Activated CD4-positive, alpha-beta T cell treated with anti-CD3 and anti-CD28 coated beads for 36 hours (primary cell): ENCODE measurements at regions of chr22 and their contacts with region 1.

Region 1: GRCh38 chr22:26756675-26757293 is 99.4 kb downstream of the MIAT start:
- DNase-seq: peak; percentile 80
- ATAC-seq: peak; percentile 81
- H3K4me3 Mint-ChIP-seq: no peak overlapping the region
- H3K27ac Mint-ChIP-seq: no peak overlapping the region
- H3K4me1 Mint-ChIP-seq: no peaks in the 10 kb centered on the region
- H3K27me3 Mint-ChIP-seq: no peaks in the 10 kb centered on the region

Region 2: DNA sequence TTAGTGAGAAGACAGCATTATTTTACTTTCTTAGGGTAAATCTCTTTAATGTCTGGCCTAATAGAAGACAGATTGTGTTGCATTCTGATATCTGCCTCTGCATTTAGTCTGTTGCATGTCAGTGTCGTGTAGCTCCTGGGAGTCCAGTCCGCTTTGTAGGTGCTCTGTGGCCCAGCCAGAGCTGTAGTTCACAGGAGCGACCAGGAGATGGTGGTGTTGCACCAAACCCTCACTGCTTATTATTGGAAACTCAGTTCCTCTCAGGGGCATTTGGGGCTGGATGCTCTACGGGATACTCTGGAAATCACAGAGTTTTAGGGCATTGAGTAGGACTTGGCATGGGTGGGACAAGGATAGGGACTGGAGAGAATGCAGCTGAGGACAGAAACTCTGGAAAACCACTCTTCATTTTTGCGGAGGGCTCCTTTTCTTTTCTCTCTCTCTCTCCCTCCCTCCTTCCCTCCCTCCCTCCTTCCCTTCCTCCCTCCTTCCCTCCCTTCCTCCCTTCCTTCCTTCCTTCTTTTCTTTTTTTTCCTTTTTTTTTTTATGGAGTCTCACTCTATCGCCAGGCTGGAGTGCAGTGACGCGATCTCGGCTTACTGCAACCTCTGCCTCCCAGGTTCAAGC is 77.7 kb before region 1 on chr22:
- CTCF ChIA-PET with region 1: interaction called, 3 read pairs
- POLR2A ChIA-PET with region 1: no interaction called
- intact Hi-C with region 1: loop called in 1 of 2 experiments (anchors 2 kb)
- DNase-seq: peak; percentile 85
- ATAC-seq: peak; percentile 76
- H3K4me3 Mint-ChIP-seq: no peak overlapping the region
- H3K27ac Mint-ChIP-seq: peak overlapping the region; percentile 39
- H3K4me1 Mint-ChIP-seq: peaks cover 52% of the 10 kb centered on the region
- H3K27me3 Mint-ChIP-seq: no peaks in the 10 kb centered on the region

Region 3: DNA sequence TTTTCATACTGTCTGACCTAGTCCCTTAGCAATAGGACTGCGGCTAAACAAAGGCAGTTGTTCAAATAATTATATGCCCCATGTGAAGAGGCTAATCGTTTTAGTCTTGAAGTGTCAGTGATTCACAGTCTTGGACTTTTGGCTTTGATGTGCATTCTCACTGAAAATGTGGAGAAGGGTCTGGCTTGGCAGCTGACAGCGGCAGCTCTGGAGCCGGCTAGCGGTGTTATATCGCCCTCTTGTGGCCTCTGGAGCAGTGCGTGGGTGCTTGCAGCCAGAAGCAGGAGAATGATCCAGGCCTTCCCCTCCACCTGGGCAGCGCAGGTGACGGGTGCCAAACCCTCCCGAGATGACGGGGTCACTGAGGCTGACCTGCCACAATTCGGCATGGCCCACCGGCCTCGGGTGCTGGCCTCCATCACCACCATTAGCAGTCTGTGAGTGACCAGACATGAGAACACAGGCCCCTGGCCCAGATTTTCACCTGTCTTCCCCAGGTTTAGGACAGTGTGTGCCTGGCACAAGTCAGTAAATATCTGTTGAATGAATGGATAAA is 1252.6 kb after region 1 on chr22:
- CTCF ChIA-PET with region 1: no interaction called
- POLR2A ChIA-PET with region 1: no interaction called
- intact Hi-C with region 1: loop called in 1 of 2 experiments (anchors 10 kb)
- DNase-seq: peak; percentile 88
- ATAC-seq: peak; percentile 85
- H3K4me3 Mint-ChIP-seq: no peak overlapping the region
- H3K27ac Mint-ChIP-seq: no peak overlapping the region
- H3K4me1 Mint-ChIP-seq: no peaks in the 10 kb centered on the region
- H3K27me3 Mint-ChIP-seq: no peaks in the 10 kb centered on the region